CD4-positive, alpha-beta T cell (primary cell): ENCODE measurements at regions of chr17 and their contacts with region 1.

Region 1: DNA sequence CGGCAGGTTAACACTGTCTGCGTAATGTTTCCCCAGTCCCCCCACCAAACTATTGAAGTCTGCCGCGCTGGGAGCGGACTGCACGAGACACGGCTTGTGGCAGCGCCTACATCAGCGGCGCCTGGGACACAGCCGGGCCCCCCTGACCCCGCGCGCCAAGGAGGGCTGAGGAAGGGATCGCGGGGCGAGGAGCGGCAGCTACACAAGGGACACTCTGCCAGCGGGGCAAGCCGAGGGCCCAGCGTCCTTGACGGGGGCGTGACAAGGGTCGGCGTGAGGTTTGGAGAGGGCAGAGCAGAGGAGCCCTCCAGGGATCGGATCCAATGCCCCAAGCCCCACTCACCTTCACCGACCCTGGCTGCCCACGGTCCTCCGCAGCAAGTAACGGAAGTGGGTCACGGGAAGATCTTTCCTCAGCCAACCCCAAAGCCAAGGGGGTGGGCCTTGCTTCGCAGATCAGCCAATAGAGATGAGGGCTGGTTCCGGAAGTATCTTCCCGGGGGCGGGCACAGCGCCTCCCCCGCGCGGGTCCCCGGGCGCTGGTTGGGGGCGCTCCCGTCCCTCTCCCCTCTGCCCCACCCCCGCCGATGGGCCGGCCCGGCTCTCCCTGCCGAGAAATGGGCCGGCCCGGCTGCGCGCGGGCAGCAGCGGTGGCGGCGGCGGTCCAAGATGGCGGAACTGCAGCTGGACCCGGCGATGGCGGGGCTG is at the starts of genes ATP5PD and KCTD2:
- DNase-seq: peak; percentile 83 to 97 (median 92)
- ATAC-seq: peak; percentile 92
- H3K4me3 ChIP-seq: peak within 1 kb of the TSS; percentile 84
- H3K4me3 Mint-ChIP-seq: peak within 1 kb of the TSS; percentile 100
- H3K27ac ChIP-seq: peak within 1 kb of the TSS; percentile 82 to 84
- H3K27ac Mint-ChIP-seq: peak within 1 kb of the TSS; percentile 100
- H3K4me1 ChIP-seq: peaks cover 20% of the 10 kb centered on the region
- H3K4me1 Mint-ChIP-seq: peaks cover 52% of the 10 kb centered on the region
- H3K27me3 ChIP-seq: no peaks in the 10 kb centered on the region
- H3K27me3 Mint-ChIP-seq: no peaks in the 10 kb centered on the region
- CTCF ChIP-seq: no peak
- total RNA-seq, gene ATP5PD: 98.5 to 112 TPM
- total RNA-seq, gene KCTD2: 26.1 to 28.0 TPM

Region 2: GRCh38 chr17:74981979-74982662 is 64.6 kb before region 1 on chr17:
- CTCF ChIA-PET with region 1: no interaction called
- POLR2A ChIA-PET with region 1: interaction called, 10 read pairs
- intact Hi-C with region 1: loop called in 1 of 2 experiments (anchors 5 kb)
- DNase-seq: peak; percentile 61 to 93 (median 77)
- ATAC-seq: peak; percentile 91
- H3K4me3 ChIP-seq: peak overlapping the region; percentile 80
- H3K4me3 Mint-ChIP-seq: peak overlapping the region; percentile 91
- H3K27ac ChIP-seq: peak overlapping the region; percentile 53 to 71
- H3K27ac Mint-ChIP-seq: peak overlapping the region; percentile 89
- H3K4me1 ChIP-seq: peaks cover 26% of the 10 kb centered on the region
- H3K4me1 Mint-ChIP-seq: peaks cover 29% of the 10 kb centered on the region
- H3K27me3 ChIP-seq: no peaks in the 10 kb centered on the region
- H3K27me3 Mint-ChIP-seq: peaks cover 2% of the 10 kb centered on the region
- CTCF ChIP-seq: no peak

Region 3: GRCh38 chr17:75012346-75013091 is 34.2 kb before region 1 on chr17 and contains the start of gene MRPL58:
- CTCF ChIA-PET with region 1: interaction called, 21 read pairs
- POLR2A ChIA-PET with region 1: interaction called, 41 read pairs
- intact Hi-C with region 1: loop called in 1 of 2 experiments (anchors 2 kb)
- DNase-seq: peak; percentile 62 to 90 (median 75)
- ATAC-seq: peak; percentile 97
- H3K4me3 ChIP-seq: peak within 1 kb of the TSS; percentile 95
- H3K4me3 Mint-ChIP-seq: peak within 1 kb of the TSS; percentile 96
- H3K27ac ChIP-seq: peak within 1 kb of the TSS; percentile 7 to 52
- H3K27ac Mint-ChIP-seq: peak within 1 kb of the TSS; percentile 85
- H3K4me1 ChIP-seq: peaks cover 18% of the 10 kb centered on the region
- H3K4me1 Mint-ChIP-seq: peaks cover 35% of the 10 kb centered on the region
- H3K27me3 ChIP-seq: no peaks in the 10 kb centered on the region
- H3K27me3 Mint-ChIP-seq: no peaks in the 10 kb centered on the region
- CTCF ChIP-seq: peak; percentile 75
- total RNA-seq, gene MRPL58: 5.4 to 7.1 TPM

Region 4: DNA sequence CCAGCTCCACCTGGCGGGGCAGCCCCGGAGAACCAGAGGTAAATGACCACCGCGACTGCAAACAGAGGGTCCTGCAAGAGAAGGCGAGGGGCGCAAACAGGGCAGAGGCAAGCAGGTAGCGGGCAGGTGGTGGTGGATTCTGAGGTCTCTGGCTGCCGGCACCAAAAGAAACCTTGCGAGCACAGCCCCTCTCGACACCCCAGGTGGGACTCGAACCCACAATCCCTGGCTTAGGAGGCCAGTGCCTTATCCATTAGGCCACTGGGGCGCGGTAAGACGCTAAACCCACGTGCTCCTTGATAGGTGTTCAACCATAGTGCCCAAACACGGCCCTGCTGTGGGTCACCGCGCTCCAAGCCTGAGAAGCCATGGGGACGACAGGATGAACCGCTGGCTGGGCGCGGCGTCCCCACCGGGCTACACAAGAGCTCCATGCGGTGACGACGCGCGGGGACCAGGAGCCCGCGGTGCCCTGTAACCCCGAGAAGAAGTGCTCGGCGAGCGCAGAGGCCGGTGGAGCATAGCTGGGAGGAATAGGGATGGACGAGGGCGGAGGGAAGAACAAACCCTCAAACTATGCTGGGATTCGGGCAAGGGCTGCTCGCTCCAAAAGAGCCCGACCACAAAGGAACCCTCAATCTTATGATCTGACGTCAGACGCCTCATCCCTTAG is 12.4 kb before region 1 on chr17:
- CTCF ChIA-PET with region 1: interaction called, 5 read pairs
- POLR2A ChIA-PET with region 1: interaction called, 71 read pairs
- intact Hi-C with region 1: loop called (anchors 1 kb)
- DNase-seq: peak; percentile 55 to 88 (median 76)
- ATAC-seq: peak; percentile 12
- H3K4me3 ChIP-seq: peak overlapping the region; percentile 73
- H3K4me3 Mint-ChIP-seq: peak overlapping the region; percentile 92
- H3K27ac ChIP-seq: peak overlapping the region; percentile 26 to 46
- H3K27ac Mint-ChIP-seq: peak overlapping the region; percentile 98
- H3K4me1 ChIP-seq: peaks cover 56% of the 10 kb centered on the region
- H3K4me1 Mint-ChIP-seq: peaks cover 65% of the 10 kb centered on the region
- H3K27me3 ChIP-seq: no peaks in the 10 kb centered on the region
- H3K27me3 Mint-ChIP-seq: peaks cover 27% of the 10 kb centered on the region
- CTCF ChIP-seq: no peak

Region 5: GRCh38 chr17:75182569-75183450 is 136.1 kb after region 1 on chr17 and contains the start of gene SUMO2:
- CTCF ChIA-PET with region 1: no interaction called
- POLR2A ChIA-PET with region 1: interaction called, 6 read pairs
- intact Hi-C with region 1: loop called in 1 of 2 experiments (anchors 5 kb)
- DNase-seq: peak; percentile 92 to 98 (median 96)
- ATAC-seq: peak; percentile 79
- H3K4me3 ChIP-seq: peak within 1 kb of the TSS; percentile 96
- H3K4me3 Mint-ChIP-seq: peak within 1 kb of the TSS; percentile 92
- H3K27ac ChIP-seq: peak within 1 kb of the TSS; percentile 74 to 94
- H3K27ac Mint-ChIP-seq: peak within 1 kb of the TSS; percentile 87
- H3K4me1 ChIP-seq: peaks cover 40% of the 10 kb centered on the region
- H3K4me1 Mint-ChIP-seq: peaks cover 47% of the 10 kb centered on the region
- H3K27me3 ChIP-seq: no peaks in the 10 kb centered on the region
- H3K27me3 Mint-ChIP-seq: no peaks in the 10 kb centered on the region
- CTCF ChIP-seq: peak; percentile 25
- total RNA-seq, gene SUMO2: 207 to 228 TPM